ENCODE measurements at regions of chr1 and their contacts with region 1.

Region 1: GRCh38 chr1:6199298-6200187 is at the start of gene RPL22:
- DNase-seq: peak; percentile 79 to 98 (median 96)
- ATAC-seq: peak; percentile 99
- H3K4me3 ChIP-seq: peak within 1 kb of the TSS; percentile 79
- H3K4me3 Mint-ChIP-seq: peak within 1 kb of the TSS; percentile 85 to 98 (median 94)
- H3K27ac ChIP-seq: peak within 1 kb of the TSS; percentile 85
- H3K27ac Mint-ChIP-seq: peak within 1 kb of the TSS; percentile 82 to 96 (median 93)
- H3K4me1 ChIP-seq: peaks cover 24 to 25% of the 10 kb centered on the region in 2 donors
- H3K4me1 Mint-ChIP-seq: peaks cover 40 to 56% (median 47%) of the 10 kb centered on the region in 7 donors
- H3K27me3 ChIP-seq: no peaks in the 10 kb centered on the region
- H3K27me3 Mint-ChIP-seq: peaks cover 0 to under 1% (median 0%) of the 10 kb centered on the region in 5 donors
- total RNA-seq, gene RPL22: 431 to 720 (median 579) TPM

Region 2: DNA sequence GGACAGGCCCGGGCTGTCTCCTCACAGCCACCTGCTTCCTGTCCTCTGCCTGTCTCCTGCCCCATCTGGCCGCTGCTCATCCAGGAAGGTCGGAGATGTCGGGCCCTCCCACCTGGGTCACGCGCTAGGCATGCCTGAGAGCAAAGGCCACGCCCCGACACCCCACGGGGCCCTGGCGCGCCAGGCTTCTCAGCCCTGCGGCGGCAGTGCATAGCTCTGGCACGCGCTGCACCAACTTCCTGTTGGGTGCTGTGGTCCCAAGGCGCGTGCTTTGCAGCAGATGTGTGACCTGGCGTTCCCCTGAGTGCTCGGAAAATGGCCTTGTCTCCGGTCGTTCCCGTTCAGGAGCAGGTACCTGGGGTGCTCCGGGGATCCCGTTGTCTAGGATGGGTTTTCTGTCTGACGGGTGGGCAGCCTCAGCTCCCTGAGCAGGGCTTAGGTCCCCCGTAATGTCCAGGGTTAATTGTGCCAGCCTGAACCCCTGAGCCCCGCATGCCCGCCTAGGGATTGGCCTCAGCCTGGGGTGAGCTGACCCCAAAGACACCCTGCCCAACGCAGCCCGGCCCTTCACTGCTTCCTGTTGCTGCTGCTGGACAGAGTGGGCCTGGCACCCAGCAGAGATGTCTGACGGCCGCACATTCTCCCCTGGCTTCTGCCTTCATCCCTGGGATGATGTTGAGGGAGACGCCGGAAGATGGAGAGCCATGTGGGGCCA is 173.3 kb before region 1 on chr1:
- CTCF ChIA-PET with region 1: no interaction called
- POLR2A ChIA-PET with region 1: interaction called, 3 read pairs
- intact Hi-C with region 1: loop called (anchors 1 kb)
- DNase-seq: peak; percentile 82 to 92 (median 89)
- ATAC-seq: peak; percentile 92
- H3K4me3 ChIP-seq: peak overlapping the region; percentile 89
- H3K4me3 Mint-ChIP-seq: peak overlapping the region; percentile 88 to 99 (median 95)
- H3K27ac ChIP-seq: peak overlapping the region; percentile 84
- H3K27ac Mint-ChIP-seq: peak overlapping the region; percentile 87 to 98 (median 96)
- H3K4me1 ChIP-seq: peaks cover 42 to 49% of the 10 kb centered on the region in 2 donors
- H3K4me1 Mint-ChIP-seq: peaks cover 45 to 56% (median 51%) of the 10 kb centered on the region in 7 donors
- H3K27me3 ChIP-seq: no peaks in the 10 kb centered on the region
- H3K27me3 Mint-ChIP-seq: no peaks in the 10 kb centered on the region

Region 3: DNA sequence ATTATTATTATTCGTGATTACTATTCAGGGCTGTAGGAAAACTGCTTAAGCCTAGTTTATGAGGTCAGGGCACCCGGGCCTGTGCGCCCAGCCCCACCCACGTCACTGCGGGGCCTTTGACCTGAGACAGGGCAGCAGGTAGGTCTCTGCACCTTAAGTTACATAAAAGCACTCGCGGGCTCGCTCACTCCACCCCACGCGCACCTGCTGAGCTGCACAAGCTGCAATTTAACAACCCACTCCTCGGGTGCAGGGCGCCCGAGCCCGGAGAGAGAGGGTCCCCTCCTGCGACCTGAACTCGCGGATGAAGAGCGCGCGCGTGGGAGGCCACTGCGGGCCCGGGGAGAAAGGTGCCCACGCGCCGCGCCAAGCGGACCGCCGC is 35.7 kb after region 1 on chr1:
- CTCF ChIA-PET with region 1: no interaction called
- POLR2A ChIA-PET with region 1: interaction called, 8 read pairs
- intact Hi-C with region 1: loop called (anchors 1 kb)
- DNase-seq: no peak
- ATAC-seq: peak; percentile 3
- H3K4me3 ChIP-seq: peak overlapping the region; percentile 43
- H3K4me3 Mint-ChIP-seq: peak overlapping the region; percentile 79 to 90 (median 87)
- H3K27ac ChIP-seq: peak overlapping the region; percentile 66
- H3K27ac Mint-ChIP-seq: peak overlapping the region in 6 of 9 donors; percentile 28 to 78 (median 47)
- H3K4me1 ChIP-seq: peaks cover 0 to 12% of the 10 kb centered on the region in 2 donors
- H3K4me1 Mint-ChIP-seq: peaks cover 0 to 28% (median 18%) of the 10 kb centered on the region in 7 donors
- H3K27me3 ChIP-seq: no peaks in the 10 kb centered on the region
- H3K27me3 Mint-ChIP-seq: peaks cover 11 to 15% (median 12%) of the 10 kb centered on the region in 5 donors

Region 4: GRCh38 chr1:6624710-6625583 is 425.4 kb after region 1 on chr1 and contains the start of gene THAP3:
- CTCF ChIA-PET with region 1: no interaction called
- POLR2A ChIA-PET with region 1: no interaction called
- intact Hi-C with region 1: loop called in 1 of 2 experiments (anchors 1 kb)
- DNase-seq: peak; percentile 77 to 90 (median 87)
- ATAC-seq: peak; percentile 99
- H3K4me3 ChIP-seq: peak within 1 kb of the TSS; percentile 52
- H3K4me3 Mint-ChIP-seq: peak within 1 kb of the TSS; percentile 86 to 97 (median 92)
- H3K27ac ChIP-seq: peak within 1 kb of the TSS; percentile 78
- H3K27ac Mint-ChIP-seq: peak within 1 kb of the TSS; percentile 72 to 96 (median 86)
- H3K4me1 ChIP-seq: peaks cover 13 to 18% of the 10 kb centered on the region in 2 donors
- H3K4me1 Mint-ChIP-seq: peaks cover 11 to 39% (median 30%) of the 10 kb centered on the region in 7 donors
- H3K27me3 ChIP-seq: no peaks in the 10 kb centered on the region
- H3K27me3 Mint-ChIP-seq: no peaks in the 10 kb centered on the region
- total RNA-seq, gene THAP3: 14.1 to 30.5 (median 20.3) TPM

Measured in naive thymus-derived CD4-positive, alpha-beta T cell (primary cell).